Colonic mucosa (tissue), 4 donors: ENCODE measurements at regions of chr1 and their contacts with region 1.

Region 1: GRCh38 chr1:168136709-168137514 is at the start of gene GPR161:
- DNase-seq: peak; percentile 53
- H3K4me3 ChIP-seq: peak within 1 kb of the TSS; percentile 58
- H3K27ac ChIP-seq: peak within 1 kb of the TSS; percentile 34
- H3K4me1 ChIP-seq: peaks cover 6% of the 10 kb centered on the region
- H3K27me3 ChIP-seq: no peaks in the 10 kb centered on the region
- CTCF ChIP-seq: no peak
- total RNA-seq, gene GPR161: 2.5 to 3.2 TPM

Region 2: GRCh38 chr1:168092566-168093355 is 44.2 kb before region 1 on chr1:
- intact Hi-C with region 1: loop called (anchors 5 kb)
- DNase-seq: peak; percentile 20
- H3K4me3 ChIP-seq: no peak overlapping the region
- H3K27ac ChIP-seq: peak overlapping the region; percentile 2
- H3K4me1 ChIP-seq: peaks cover 8% of the 10 kb centered on the region
- H3K27me3 ChIP-seq: no peaks in the 10 kb centered on the region
- CTCF ChIP-seq: no peak